ENCODE measurements at regions of chr14 and their contacts with region 1.

Region 1: GRCh38 chr14:24806061-24806678 is 172.2 kb upstream of the GZMB start:
- DNase-seq: peak; percentile 89
- H3K4me3 ChIP-seq: no peak overlapping the region
- H3K27ac ChIP-seq: no peak overlapping the region
- H3K4me1 ChIP-seq: peaks cover 0 to 10% (median 4%) of the 10 kb centered on the region in 4 donors
- H3K27me3 ChIP-seq: no peaks in the 10 kb centered on the region
- CTCF ChIP-seq: peak; percentile 75 to 92 (median 87)
- EP300 ChIP-seq: no peak
- POLR2A ChIP-seq: no peak

Region 2: DNA sequence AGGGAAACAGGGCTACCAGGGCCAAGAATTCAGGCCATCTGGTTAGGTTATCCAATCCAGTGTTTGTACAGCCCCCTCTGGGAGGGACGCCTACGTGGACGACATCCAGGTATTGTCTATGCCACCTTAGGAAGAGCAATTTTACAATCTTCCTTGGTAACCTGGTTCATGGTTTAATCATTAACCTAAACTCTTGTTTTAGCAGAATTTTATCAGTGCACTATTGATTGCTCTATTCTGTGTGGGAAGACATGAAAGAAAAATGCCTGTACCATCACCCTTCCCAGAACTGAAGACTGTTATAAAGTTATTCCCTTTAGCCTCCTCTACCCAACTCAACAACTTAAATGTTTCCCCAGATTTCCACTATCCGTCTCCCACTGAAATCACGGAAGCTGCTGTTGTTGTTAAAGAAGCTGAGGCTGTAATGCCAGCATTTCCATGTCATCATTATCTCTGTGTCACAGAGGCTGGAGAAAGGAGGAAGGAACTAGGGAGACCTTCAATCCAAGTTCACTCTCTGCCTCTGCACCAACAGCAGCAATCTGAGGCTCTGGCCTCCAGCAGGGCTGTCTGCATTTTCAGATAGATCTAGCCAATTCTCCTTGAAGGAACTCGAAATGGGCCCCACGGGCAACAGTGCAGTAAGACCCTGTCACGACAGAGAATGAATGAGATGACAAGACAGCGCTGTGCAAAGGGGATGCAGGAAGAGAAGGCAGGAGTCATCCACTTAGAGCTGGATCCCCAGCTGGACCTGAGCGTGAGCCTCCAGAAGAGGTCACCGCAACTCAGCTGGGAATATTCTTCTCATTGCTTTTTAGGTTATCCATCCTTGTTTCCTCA is 11.3 kb after region 1 on chr14:
- in situ Hi-C with region 1: no loop called
- intact Hi-C with region 1: no loop called
- DNase-seq: peak; percentile 73
- H3K4me3 ChIP-seq: no peak overlapping the region
- H3K27ac ChIP-seq: peak overlapping the region; percentile 78 to 87 (median 80)
- H3K4me1 ChIP-seq: peaks cover 0 to 49% (median 31%) of the 10 kb centered on the region in 4 donors
- H3K27me3 ChIP-seq: no peaks in the 10 kb centered on the region
- CTCF ChIP-seq: peak in 1 of 5 experiments; percentile 24
- EP300 ChIP-seq: no peak
- POLR2A ChIP-seq: no peak

Region 3: DNA sequence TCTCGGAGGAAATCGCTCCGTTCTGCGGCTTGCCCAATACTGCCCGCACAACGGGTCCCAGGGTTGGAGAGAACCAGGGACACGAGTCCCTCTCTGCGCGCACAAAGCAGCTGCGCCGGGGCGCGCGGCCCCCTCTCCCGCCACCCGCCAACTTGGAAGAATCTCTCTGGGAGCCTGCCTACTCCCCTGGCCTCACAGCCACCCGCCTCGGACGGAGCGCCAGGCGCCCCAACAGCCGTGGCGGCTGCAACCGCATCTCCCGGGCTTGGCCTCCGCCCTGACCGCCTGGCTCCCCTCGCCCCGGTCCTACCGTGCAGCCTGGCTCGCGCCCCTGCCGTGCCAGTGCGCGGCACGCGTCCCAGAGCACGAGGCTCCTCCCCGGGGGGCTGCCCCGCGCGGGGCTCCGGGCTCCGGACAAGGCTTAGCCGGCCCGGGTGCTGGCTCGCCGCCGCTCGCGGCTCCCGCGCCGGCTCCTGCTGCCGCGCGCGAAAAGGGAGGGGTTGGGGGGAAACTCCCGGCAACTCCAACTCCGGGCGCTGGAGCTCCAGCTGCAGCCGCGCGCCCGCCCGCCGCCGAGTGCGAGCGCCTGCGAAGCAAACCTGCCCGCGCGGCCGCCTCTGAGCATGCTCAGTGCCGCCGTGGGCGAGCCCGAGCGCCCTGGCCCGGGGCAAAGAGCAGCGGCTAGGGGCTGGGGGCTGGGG is 243.5 kb after region 1 on chr14 and contains the start of gene STXBP6:
- in situ Hi-C with region 1: loop called (anchors 10 kb)
- intact Hi-C with region 1: loop called (anchors 10 kb)
- DNase-seq: peak; percentile 78
- H3K4me3 ChIP-seq: peak within 1 kb of the TSS; percentile 71 to 85 (median 74)
- H3K27ac ChIP-seq: peak within 1 kb of the TSS; percentile 86 to 94 (median 90)
- H3K4me1 ChIP-seq: peaks cover 4 to 43% (median 25%) of the 10 kb centered on the region in 4 donors
- H3K27me3 ChIP-seq: peaks cover 12% of the 10 kb centered on the region
- CTCF ChIP-seq: no peak
- EP300 ChIP-seq: no peak
- POLR2A ChIP-seq: peak; percentile 46
- total RNA-seq, gene STXBP6: 7.1 to 16.8 (median 8.9) TPM

Region 4: DNA sequence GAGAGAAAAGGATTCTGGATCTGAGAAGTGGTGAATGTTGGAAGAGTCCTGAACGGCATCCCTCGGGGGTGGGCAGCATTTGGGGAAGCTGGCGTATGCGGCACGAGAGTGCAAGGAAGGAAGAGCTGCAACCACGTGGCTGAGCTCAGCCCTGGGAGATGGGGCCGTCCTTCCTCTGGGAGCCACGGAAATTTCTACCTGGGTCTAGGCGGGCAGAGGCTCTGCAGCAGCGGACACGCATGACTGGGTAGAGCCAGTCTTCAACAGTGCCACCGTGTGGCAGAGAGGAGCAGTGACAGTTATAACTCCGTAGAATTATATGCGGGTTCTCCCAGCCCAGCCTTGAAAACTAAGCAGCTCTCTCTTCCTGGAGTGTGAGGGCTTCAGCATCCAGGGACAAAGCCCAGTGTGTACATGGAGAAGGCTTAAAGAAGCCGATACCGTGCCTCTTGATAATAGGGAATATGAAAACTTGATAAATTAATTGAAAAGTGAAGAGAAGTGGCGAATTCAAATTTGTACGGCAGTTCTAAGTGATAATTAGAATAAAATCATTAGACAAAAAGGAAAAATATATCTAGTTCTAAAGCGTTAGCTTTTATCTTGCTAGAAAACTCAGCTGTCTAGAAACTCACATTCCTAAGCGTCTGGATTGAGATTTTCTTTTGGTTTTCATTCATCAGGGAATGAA is 326.7 kb after region 1 on chr14:
- in situ Hi-C with region 1: loop called in 2 of 4 experiments (anchors 25 kb)
- intact Hi-C with region 1: loop called (anchors 5 kb)
- DNase-seq: peak; percentile 72
- H3K4me3 ChIP-seq: no peak overlapping the region
- H3K27ac ChIP-seq: no peak overlapping the region
- H3K4me1 ChIP-seq: peaks cover 0 to 3% (median 2%) of the 10 kb centered on the region in 4 donors
- H3K27me3 ChIP-seq: peaks cover 7% of the 10 kb centered on the region
- CTCF ChIP-seq: peak; percentile 78 to 87 (median 82)
- EP300 ChIP-seq: no peak
- POLR2A ChIP-seq: no peak

Region 5: GRCh38 chr14:25140411-25140810 is 334.2 kb after region 1 on chr14:
- in situ Hi-C with region 1: loop called in 3 of 4 experiments (anchors 10 to 25 kb)
- intact Hi-C with region 1: no loop called
- DNase-seq: no peak
- H3K4me3 ChIP-seq: no peak overlapping the region
- H3K27ac ChIP-seq: no peak overlapping the region
- H3K4me1 ChIP-seq: no peaks in the 10 kb centered on the region
- H3K27me3 ChIP-seq: no peaks in the 10 kb centered on the region
- CTCF ChIP-seq: no peak
- EP300 ChIP-seq: no peak
- POLR2A ChIP-seq: no peak

Measured in transverse colon (tissue), 4 donors.